ENCODE measurements at regions of chrX and their contacts with region 1.

Region 1: GRCh38 chrX:54808605-54809483 is 1.3 kb downstream of the MAGED2 start:
- DNase-seq: peak; percentile 88
- H3K4me3 Mint-ChIP-seq: peak overlapping the region; percentile 89
- H3K27ac Mint-ChIP-seq: peak overlapping the region; percentile 85
- H3K4me1 Mint-ChIP-seq: peaks cover 17% of the 10 kb centered on the region
- H3K27me3 Mint-ChIP-seq: peaks cover 10% of the 10 kb centered on the region

Region 2: DNA sequence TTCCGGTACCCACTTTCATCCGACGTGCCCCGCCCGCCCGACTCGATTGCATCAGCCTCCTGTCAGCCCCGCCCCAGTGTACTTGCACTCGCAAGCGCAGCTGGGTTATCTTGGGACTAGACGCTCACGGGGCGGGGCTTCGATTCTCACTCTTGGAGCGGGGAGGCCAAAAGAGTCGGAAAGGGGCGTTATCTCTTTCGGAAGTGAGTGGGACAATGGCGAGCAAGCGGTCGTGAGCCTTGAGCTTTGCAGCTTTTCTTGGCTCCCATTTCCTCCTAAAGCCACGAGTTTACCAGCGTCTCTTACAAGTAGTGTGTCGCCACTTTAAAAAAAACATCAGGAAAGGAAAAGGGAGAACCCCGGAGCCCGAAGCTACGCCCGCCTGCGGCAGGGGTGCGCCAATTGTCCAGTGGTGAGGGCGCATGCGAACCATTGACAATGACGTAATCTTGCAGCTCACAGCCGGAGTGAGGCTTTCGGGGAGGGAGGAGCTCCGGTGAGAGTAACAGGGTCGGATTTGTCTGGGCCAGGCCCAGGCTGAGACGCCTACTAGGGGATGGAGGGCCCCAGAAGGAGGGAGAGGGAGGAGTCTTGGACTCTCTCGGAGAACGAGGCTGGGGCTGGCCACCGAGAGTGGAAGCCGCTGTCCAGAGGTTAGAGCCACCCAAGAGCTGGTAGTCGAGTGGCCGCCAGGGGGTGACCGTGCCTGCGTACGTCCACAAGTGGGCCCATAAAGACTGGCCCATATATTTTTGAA is 169.3 kb before region 1 on chrX:
- intact Hi-C with region 1: loop called (anchors 1 kb)
- DNase-seq: peak; percentile 87
- H3K4me3 Mint-ChIP-seq: peak overlapping the region; percentile 93
- H3K27ac Mint-ChIP-seq: peak overlapping the region; percentile 99
- H3K4me1 Mint-ChIP-seq: peaks cover 10% of the 10 kb centered on the region
- H3K27me3 Mint-ChIP-seq: no peaks in the 10 kb centered on the region